Aorta (tissue), 5 donors: ENCODE measurements at regions of chr1 and their contacts with region 1.

Region 1: GRCh38 chr1:48677306-48678287 is 99.1 kb downstream of the BEND5 start:
- DNase-seq: peak; percentile 77 to 89
- ATAC-seq: peak; percentile 51
- H3K4me3 ChIP-seq: no peak overlapping the region
- H3K27ac ChIP-seq: no peak overlapping the region
- H3K4me1 ChIP-seq: peaks cover 2 to 5% of the 10 kb centered on the region in 2 donors
- H3K27me3 ChIP-seq: no peaks in the 10 kb centered on the region

Region 2: GRCh38 chr1:48596046-48596445 is 81.6 kb before region 1 on chr1:
- intact Hi-C with region 1: no loop called
- DNase-seq: no peak
- ATAC-seq: no peak
- H3K4me3 ChIP-seq: no peak overlapping the region
- H3K27ac ChIP-seq: no peak overlapping the region
- H3K4me1 ChIP-seq: no peaks in the 10 kb centered on the region
- H3K27me3 ChIP-seq: no peaks in the 10 kb centered on the region

Region 3: GRCh38 chr1:48697066-48697707 is 19.6 kb after region 1 on chr1:
- intact Hi-C with region 1: loop called in 1 of 2 experiments (anchors 2 kb)
- DNase-seq: peak; percentile 60 to 87
- ATAC-seq: no peak
- H3K4me3 ChIP-seq: no peak overlapping the region
- H3K27ac ChIP-seq: no peak overlapping the region
- H3K4me1 ChIP-seq: no peaks in the 10 kb centered on the region
- H3K27me3 ChIP-seq: no peaks in the 10 kb centered on the region

Region 4: GRCh38 chr1:48776393-48777218 is 99.0 kb after region 1 on chr1 and contains the start of gene BEND5:
- intact Hi-C with region 1: loop called in 1 of 2 experiments (anchors 5 kb)
- DNase-seq: peak; percentile 66 to 86
- ATAC-seq: peak; percentile 78
- H3K4me3 ChIP-seq: peak within 1 kb of the TSS; percentile 96 to 97
- H3K27ac ChIP-seq: peak within 1 kb of the TSS; percentile 86 to 96
- H3K4me1 ChIP-seq: peaks cover 1 to 15% of the 10 kb centered on the region in 2 donors
- H3K27me3 ChIP-seq: no peaks in the 10 kb centered on the region
- total RNA-seq, gene BEND5: 6.6 to 11.2 TPM

Region 5: GRCh38 chr1:48807554-48808260 is 130.1 kb after region 1 on chr1:
- intact Hi-C with region 1: loop called in 1 of 2 experiments (anchors 5 kb)
- DNase-seq: peak in 1 of 2 donors; percentile 48
- ATAC-seq: no peak
- H3K4me3 ChIP-seq: no peak overlapping the region
- H3K27ac ChIP-seq: peak overlapping the region in 1 of 2 donors; percentile 18
- H3K4me1 ChIP-seq: peaks cover 2 to 3% of the 10 kb centered on the region in 2 donors
- H3K27me3 ChIP-seq: no peaks in the 10 kb centered on the region

Region 6: DNA sequence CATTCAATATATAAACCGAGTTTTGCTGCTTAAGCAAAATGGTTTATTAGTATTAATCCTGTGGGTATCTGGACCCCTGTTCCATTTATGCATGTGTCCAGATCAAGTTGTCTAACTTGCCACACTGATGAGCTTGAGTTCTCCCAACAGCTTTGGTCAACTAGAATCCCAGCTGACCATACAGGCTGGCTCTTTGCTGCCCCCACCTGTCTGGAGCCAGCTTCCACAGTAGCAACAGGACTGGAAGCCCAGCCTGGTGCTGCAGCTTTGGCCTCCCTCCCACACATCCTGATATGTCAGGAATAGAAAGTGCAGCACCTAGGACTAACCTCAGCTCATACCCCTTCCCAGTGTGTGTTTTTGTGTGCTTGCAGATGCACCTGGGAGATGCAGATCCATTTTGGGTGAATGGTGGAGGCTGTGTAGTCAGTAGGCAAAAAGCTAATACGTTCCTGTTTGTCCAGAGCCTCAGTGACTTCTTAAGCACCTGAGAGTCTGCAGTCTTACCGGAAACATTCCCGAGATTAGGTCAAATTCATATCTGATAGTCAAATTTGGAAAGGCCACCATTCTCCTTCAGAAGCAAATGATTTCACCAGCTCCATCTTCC is 140.0 kb after region 1 on chr1:
- intact Hi-C with region 1: loop called (anchors 2 to 5 kb)
- DNase-seq: peak; percentile 72 to 86
- ATAC-seq: peak; percentile 75
- H3K4me3 ChIP-seq: no peak overlapping the region
- H3K27ac ChIP-seq: no peak overlapping the region
- H3K4me1 ChIP-seq: no peaks in the 10 kb centered on the region
- H3K27me3 ChIP-seq: no peaks in the 10 kb centered on the region